ENCODE measurements at regions of chr11 and their contacts with region 1.

Region 1: DNA sequence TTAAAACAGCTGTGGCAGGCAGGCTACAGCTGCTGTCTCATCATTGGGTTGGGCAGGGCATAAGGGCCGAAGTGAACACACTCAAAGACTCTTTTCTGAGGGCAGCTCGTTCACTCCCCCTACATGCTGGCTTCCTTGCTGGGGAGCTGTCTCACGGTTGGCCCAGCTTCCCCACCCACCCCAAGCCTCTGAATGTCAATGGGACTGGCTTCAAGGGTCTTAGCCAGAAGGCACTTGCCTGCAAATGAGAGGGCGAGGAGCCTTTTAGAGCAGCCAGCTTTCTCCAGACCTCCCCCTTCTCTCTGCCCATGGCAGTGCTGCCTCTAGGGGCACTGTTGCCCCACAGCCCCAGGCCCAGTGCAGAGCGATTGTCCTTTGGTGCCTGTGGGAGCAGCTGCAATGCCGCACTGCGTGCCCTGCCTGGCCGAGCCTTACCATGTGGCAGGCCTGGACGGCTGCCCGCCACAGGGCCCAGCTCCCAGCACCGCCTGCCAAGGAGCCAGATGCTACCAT is 94.7 kb upstream of the RASSF10 start:
- DNase-seq: peak; percentile 88
- ATAC-seq: peak; percentile 98
- H3K4me3 Mint-ChIP-seq: peak overlapping the region; percentile 55
- H3K27ac Mint-ChIP-seq: peak overlapping the region; percentile 99
- H3K4me1 Mint-ChIP-seq: peaks cover 59% of the 10 kb centered on the region
- H3K27me3 Mint-ChIP-seq: no peaks in the 10 kb centered on the region
- CTCF ChIP-seq: peak; percentile 62

Region 2: GRCh38 chr11:12599408-12600143 is 314.9 kb before region 1 on chr11:
- CTCF ChIA-PET with region 1: interaction called, 10 read pairs
- POLR2A ChIA-PET with region 1: no interaction called
- DNase-seq: peak; percentile 81
- ATAC-seq: peak; percentile 95
- H3K4me3 Mint-ChIP-seq: no peak overlapping the region
- H3K27ac Mint-ChIP-seq: no peak overlapping the region
- H3K4me1 Mint-ChIP-seq: peaks cover 15% of the 10 kb centered on the region
- H3K27me3 Mint-ChIP-seq: no peaks in the 10 kb centered on the region
- CTCF ChIP-seq: peak; percentile 90

Region 3: GRCh38 chr11:12888525-12889158 is 25.8 kb before region 1 on chr11:
- CTCF ChIA-PET with region 1: interaction called, 22 read pairs
- POLR2A ChIA-PET with region 1: interaction called, 3 read pairs
- DNase-seq: peak; percentile 85
- ATAC-seq: peak; percentile 82
- H3K4me3 Mint-ChIP-seq: no peak overlapping the region
- H3K27ac Mint-ChIP-seq: peak overlapping the region; percentile 47; the same call in 1 of the 2 replicates
- H3K4me1 Mint-ChIP-seq: peaks cover 20% of the 10 kb centered on the region
- H3K27me3 Mint-ChIP-seq: no peaks in the 10 kb centered on the region
- CTCF ChIP-seq: peak; percentile 57

Region 4: DNA sequence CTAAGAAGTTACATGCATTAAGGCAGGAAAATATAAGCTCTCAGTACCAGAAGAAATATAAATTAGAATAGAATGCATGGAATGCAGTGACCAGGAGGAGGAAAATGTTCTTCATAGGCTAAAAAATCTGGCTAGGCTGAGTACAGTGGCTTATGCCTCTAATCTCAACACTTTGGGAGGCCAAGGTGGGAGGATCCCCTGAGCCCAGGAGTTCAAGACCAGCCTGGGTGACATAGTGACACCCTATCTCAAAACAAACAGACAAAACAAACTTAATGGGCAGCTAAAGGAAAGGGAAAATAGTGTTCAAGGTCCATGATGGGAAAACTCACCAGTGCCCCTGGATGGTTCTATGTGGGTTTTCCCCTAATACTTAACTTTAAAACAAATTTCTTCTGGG is 16.4 kb after region 1 on chr11:
- CTCF ChIA-PET with region 1: interaction called, 33 read pairs
- POLR2A ChIA-PET with region 1: no interaction called
- DNase-seq: no peak
- ATAC-seq: no peak
- H3K4me3 Mint-ChIP-seq: no peak overlapping the region
- H3K27ac Mint-ChIP-seq: peak overlapping the region; percentile 85
- H3K4me1 Mint-ChIP-seq: peaks cover 10% of the 10 kb centered on the region
- H3K27me3 Mint-ChIP-seq: no peaks in the 10 kb centered on the region
- CTCF ChIP-seq: no peak

Region 5: DNA sequence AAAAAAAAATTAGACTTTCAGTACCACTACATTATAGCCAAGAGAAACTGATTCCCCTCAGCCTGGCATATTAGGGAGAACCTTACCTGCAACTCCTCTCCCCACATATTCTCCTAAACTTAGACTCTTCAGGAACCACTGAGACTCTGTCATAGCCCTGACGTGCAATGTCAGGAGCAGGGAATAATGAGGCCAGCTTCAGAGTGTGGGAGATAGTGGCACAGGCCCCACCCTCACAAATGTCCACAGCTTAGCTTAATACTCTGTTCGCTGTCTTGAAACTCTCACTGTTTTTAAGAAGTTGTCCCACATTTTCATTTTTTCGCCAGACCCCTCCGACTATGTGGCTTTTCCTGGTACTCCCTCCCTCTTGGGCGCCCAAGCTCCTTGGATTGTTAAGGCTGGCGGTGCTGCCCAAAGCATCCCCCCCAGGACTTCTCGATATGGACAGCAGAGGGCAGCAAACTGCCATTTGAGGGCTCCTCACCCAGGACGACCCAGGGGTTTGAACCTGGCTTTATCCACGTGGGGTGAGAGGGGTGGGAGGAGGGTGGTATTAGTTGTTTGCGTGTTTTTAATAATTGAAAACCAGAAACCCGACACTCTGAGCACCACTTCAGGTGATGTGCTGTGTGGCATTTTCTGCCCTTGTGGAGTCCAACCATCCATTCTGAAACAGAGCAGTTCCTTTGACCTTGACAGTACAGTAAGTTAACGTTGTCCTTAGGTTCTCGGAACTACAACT is 49.5 kb after region 1 on chr11:
- CTCF ChIA-PET with region 1: interaction called, 61 read pairs
- POLR2A ChIA-PET with region 1: no interaction called
- DNase-seq: peak; percentile 88
- ATAC-seq: peak; percentile 98
- H3K4me3 Mint-ChIP-seq: no peak overlapping the region
- H3K27ac Mint-ChIP-seq: no peak overlapping the region
- H3K4me1 Mint-ChIP-seq: peaks cover 11% of the 10 kb centered on the region; the same call in 1 of the 2 replicates
- H3K27me3 Mint-ChIP-seq: peaks cover 8% of the 10 kb centered on the region
- CTCF ChIP-seq: peak; percentile 78

Measured in WTC11 (cell line).